ENCODE measurements at regions of chr11 and their contacts with region 1.

Region 1: GRCh38 chr11:3057069-3057963 is at the start of gene CARS1:
- DNase-seq: peak; percentile 79 to 96 (median 92)
- ATAC-seq: peak; percentile 97
- H3K4me3 ChIP-seq: peak within 1 kb of the TSS; percentile 88 to 93
- H3K4me3 Mint-ChIP-seq: peak within 1 kb of the TSS; percentile 87
- H3K27ac ChIP-seq: peak within 1 kb of the TSS; percentile 73 to 76
- H3K27ac Mint-ChIP-seq: peak within 1 kb of the TSS; percentile 79
- H3K4me1 ChIP-seq: peaks cover 17% of the 10 kb centered on the region
- H3K4me1 Mint-ChIP-seq: peaks cover 38% of the 10 kb centered on the region
- H3K27me3 ChIP-seq: no peaks in the 10 kb centered on the region
- H3K27me3 Mint-ChIP-seq: no peaks in the 10 kb centered on the region
- CTCF ChIP-seq: no peak
- total RNA-seq, gene CARS1: 34.2 to 34.7 TPM

Region 2: GRCh38 chr11:3037040-3037944 is 20.0 kb before region 1 on chr11:
- CTCF ChIA-PET with region 1: interaction called, 9 read pairs
- POLR2A ChIA-PET with region 1: interaction called, 8 read pairs
- intact Hi-C with region 1: loop called in 1 of 2 experiments (anchors 1 kb)
- DNase-seq: peak in 8 of 9 experiments; percentile 18 to 66 (median 48)
- ATAC-seq: peak; percentile 84
- H3K4me3 ChIP-seq: no peak overlapping the region
- H3K4me3 Mint-ChIP-seq: no peak overlapping the region
- H3K27ac ChIP-seq: no peak overlapping the region
- H3K27ac Mint-ChIP-seq: no peak overlapping the region
- H3K4me1 ChIP-seq: peaks cover 6% of the 10 kb centered on the region
- H3K4me1 Mint-ChIP-seq: peaks cover 12% of the 10 kb centered on the region
- H3K27me3 ChIP-seq: no peaks in the 10 kb centered on the region
- H3K27me3 Mint-ChIP-seq: no peaks in the 10 kb centered on the region
- CTCF ChIP-seq: peak; percentile 30

Region 3: GRCh38 chr11:3378426-3379423 is 321.4 kb after region 1 on chr11 and contains the start of gene ZNF195:
- CTCF ChIA-PET with region 1: no interaction called
- POLR2A ChIA-PET with region 1: no interaction called
- intact Hi-C with region 1: loop called in 1 of 2 experiments (anchors 2 kb)
- DNase-seq: peak; percentile 92 to 98 (median 97)
- ATAC-seq: peak; percentile 99
- H3K4me3 ChIP-seq: peak within 1 kb of the TSS; percentile 84 to 97
- H3K4me3 Mint-ChIP-seq: peak within 1 kb of the TSS; percentile 96
- H3K27ac ChIP-seq: peak within 1 kb of the TSS; percentile 80 to 91
- H3K27ac Mint-ChIP-seq: peak within 1 kb of the TSS; percentile 95
- H3K4me1 ChIP-seq: peaks cover 27% of the 10 kb centered on the region
- H3K4me1 Mint-ChIP-seq: peaks cover 58% of the 10 kb centered on the region
- H3K27me3 ChIP-seq: no peaks in the 10 kb centered on the region
- H3K27me3 Mint-ChIP-seq: no peaks in the 10 kb centered on the region
- CTCF ChIP-seq: no peak
- total RNA-seq, gene ZNF195: 25.5 to 29.1 TPM

Measured in CD8-positive, alpha-beta T cell (primary cell).